IMR-90 (cell line): ENCODE measurements at regions of chr5 and their contacts with region 1.

Region 1: DNA sequence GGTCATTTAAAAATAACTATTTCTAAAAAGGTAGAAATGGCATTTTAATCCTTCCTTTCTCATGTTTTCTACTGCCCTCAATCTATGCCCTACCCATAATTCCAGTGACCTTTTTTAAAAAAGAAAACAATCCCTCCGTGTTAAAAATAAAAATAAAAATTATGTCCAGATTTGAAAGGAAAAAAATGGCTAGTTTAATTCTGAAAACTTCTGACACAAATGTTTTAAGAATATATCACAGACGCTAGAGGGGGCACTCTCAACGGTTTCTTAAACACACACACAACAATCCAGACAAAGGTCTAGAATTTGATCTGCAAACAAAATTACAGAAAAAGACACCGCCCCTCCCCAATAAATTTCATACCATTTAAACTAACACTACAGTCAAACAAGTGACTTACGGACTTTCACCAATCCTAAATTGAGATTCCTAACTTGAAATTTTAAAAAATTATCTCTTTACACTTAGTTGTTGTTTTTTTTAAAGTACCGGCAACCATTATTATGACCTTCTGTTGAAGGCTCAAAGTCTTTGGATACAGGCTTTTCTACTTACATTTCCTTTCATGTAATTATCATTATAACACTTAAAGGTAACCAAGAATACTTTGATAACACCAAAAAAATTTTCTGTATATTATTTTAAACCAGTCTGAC is 38.2 kb downstream of the CLINT1 start:
- DNase-seq: peak; percentile 65
- ATAC-seq: peak; percentile 20; the same call in 1 of the 2 replicates
- H3K4me3 ChIP-seq: no peak overlapping the region
- H3K27ac ChIP-seq: no peak overlapping the region
- H3K4me1 ChIP-seq: peaks cover 13% of the 10 kb centered on the region
- H3K27me3 ChIP-seq: no peaks in the 10 kb centered on the region
- CTCF ChIP-seq: peak; percentile 61
- POLR2A ChIP-seq: no peak
- RAD21 ChIP-seq: peak; percentile 29; the same call in 1 of the 2 replicates

Region 2: DNA sequence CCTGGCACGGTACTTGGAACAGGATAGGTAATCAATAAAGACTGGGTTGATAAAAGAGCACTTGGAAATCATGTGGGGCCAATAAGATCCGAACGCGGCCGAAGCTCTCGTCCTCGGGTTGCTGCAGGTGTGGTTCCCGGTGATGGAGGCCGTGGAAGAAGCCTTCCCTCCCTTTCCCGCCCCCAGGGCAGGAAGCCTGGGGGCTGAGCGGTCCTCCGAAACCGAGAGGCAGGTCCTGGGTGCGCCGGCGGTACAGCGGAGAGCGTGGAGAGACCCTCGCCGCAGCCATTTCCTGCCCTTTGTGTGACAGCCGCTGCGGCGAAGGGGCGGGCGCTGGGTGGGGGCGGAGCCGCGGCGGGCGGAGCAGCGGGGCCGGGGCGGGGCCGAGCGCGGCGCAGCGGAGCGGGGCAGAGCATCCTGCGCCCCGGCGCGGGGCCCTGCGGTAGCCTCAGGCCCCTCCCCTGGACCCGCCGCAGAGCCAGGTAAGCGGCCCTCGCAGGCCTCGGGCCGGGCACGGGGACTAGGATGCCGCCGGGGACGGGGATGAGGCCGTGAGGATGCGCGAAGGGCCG is 554.9 kb before region 1 on chr5 and contains the start of gene CYFIP2:
- CTCF ChIA-PET with region 1: no interaction called
- POLR2A ChIA-PET with region 1: no interaction called
- dilution Hi-C with region 1: no loop called
- in situ Hi-C with region 1: no loop called
- intact Hi-C with region 1: no loop called
- DNase-seq: peak; percentile 4
- ATAC-seq: peak; percentile 99
- H3K4me3 ChIP-seq: peak within 1 kb of the TSS; percentile 80
- H3K27ac ChIP-seq: no peak within 1 kb of the TSS
- H3K4me1 ChIP-seq: no peaks in the 10 kb centered on the region
- H3K27me3 ChIP-seq: peaks cover 22% of the 10 kb centered on the region
- CTCF ChIP-seq: no peak
- POLR2A ChIP-seq: no peak
- RAD21 ChIP-seq: no peak
- total RNA-seq, gene CYFIP2: 11.7 and 13.4 TPM in 2 replicates

Region 3: GRCh38 chr5:157858527-157859226 is 38.0 kb after region 1 on chr5 and contains the start of gene CLINT1:
- CTCF ChIA-PET with region 1: interaction called, 4 read pairs
- POLR2A ChIA-PET with region 1: no interaction called
- dilution Hi-C with region 1: no loop called
- in situ Hi-C with region 1: no loop called
- intact Hi-C with region 1: loop called (anchors 2 kb)
- DNase-seq: peak; percentile 83
- ATAC-seq: peak; percentile 96
- H3K4me3 ChIP-seq: peak within 1 kb of the TSS; percentile 98
- H3K27ac ChIP-seq: peak within 1 kb of the TSS; percentile 98
- H3K4me1 ChIP-seq: no peaks in the 10 kb centered on the region
- H3K27me3 ChIP-seq: no peaks in the 10 kb centered on the region
- CTCF ChIP-seq: no peak
- POLR2A ChIP-seq: peak; percentile 82
- RAD21 ChIP-seq: no peak
- total RNA-seq, gene CLINT1: 124 and 146 TPM in 2 replicates

Region 4: GRCh38 chr5:157948738-157949410 is 128.2 kb after region 1 on chr5:
- CTCF ChIA-PET with region 1: interaction called, 8 read pairs
- POLR2A ChIA-PET with region 1: no interaction called
- dilution Hi-C with region 1: no loop called
- in situ Hi-C with region 1: no loop called
- intact Hi-C with region 1: loop called (anchors 1 kb)
- DNase-seq: peak; percentile 90
- ATAC-seq: peak; percentile 100
- H3K4me3 ChIP-seq: no peak overlapping the region
- H3K27ac ChIP-seq: no peak overlapping the region
- H3K4me1 ChIP-seq: no peaks in the 10 kb centered on the region
- H3K27me3 ChIP-seq: no peaks in the 10 kb centered on the region
- CTCF ChIP-seq: peak; percentile 93
- POLR2A ChIP-seq: no peak
- RAD21 ChIP-seq: peak; percentile 63

Region 5: DNA sequence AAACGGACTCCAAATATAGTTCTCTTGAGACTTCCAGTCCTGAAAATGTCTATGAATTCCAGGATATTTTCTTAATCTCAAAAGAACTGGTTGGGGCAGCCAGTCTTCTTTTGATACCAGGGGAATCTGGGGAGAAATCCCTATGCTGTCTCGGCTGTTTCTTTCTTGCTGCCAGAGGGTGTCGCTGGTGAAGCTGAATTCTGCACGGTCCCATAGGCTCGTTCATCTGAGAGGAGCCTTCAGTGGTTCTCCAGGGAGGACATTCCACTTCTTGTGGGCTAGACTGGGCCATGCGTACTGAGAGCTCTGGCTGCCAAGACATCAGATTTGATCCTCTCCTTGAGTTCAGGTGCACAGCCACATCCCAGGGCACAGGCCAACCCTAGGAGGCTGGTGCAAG is 193.2 kb after region 1 on chr5:
- CTCF ChIA-PET with region 1: no interaction called
- POLR2A ChIA-PET with region 1: no interaction called
- dilution Hi-C with region 1: loop called (anchors 25 kb)
- in situ Hi-C with region 1: no loop called
- intact Hi-C with region 1: no loop called
- DNase-seq: peak; percentile 12
- ATAC-seq: peak; percentile 72
- H3K4me3 ChIP-seq: no peak overlapping the region
- H3K27ac ChIP-seq: no peak overlapping the region
- H3K4me1 ChIP-seq: no peaks in the 10 kb centered on the region
- H3K27me3 ChIP-seq: no peaks in the 10 kb centered on the region
- CTCF ChIP-seq: peak; percentile 18; the same call in 1 of the 2 replicates
- POLR2A ChIP-seq: no peak
- RAD21 ChIP-seq: no peak

Region 6: GRCh38 chr5:158174918-158175851 is 354.5 kb after region 1 on chr5:
- CTCF ChIA-PET with region 1: no interaction called
- POLR2A ChIA-PET with region 1: no interaction called
- dilution Hi-C with region 1: no loop called
- in situ Hi-C with region 1: no loop called
- intact Hi-C with region 1: loop called (anchors 10 kb)
- DNase-seq: peak; percentile 56
- ATAC-seq: peak; percentile 77
- H3K4me3 ChIP-seq: no peak overlapping the region
- H3K27ac ChIP-seq: no peak overlapping the region
- H3K4me1 ChIP-seq: no peaks in the 10 kb centered on the region
- H3K27me3 ChIP-seq: no peaks in the 10 kb centered on the region; the same call in none of the 2 replicates
- CTCF ChIP-seq: peak; percentile 86
- POLR2A ChIP-seq: 0 out of 2 replicates have a peak, but pooled peaks have one; percentile 28
- RAD21 ChIP-seq: peak; percentile 94

Region 7: GRCh38 chr5:159133041-159133741 is 1312.5 kb after region 1 on chr5:
- CTCF ChIA-PET with region 1: no interaction called
- POLR2A ChIA-PET with region 1: no interaction called
- dilution Hi-C with region 1: no loop called
- in situ Hi-C with region 1: no loop called
- intact Hi-C with region 1: loop called (anchors 5 kb)
- DNase-seq: peak; percentile 67
- ATAC-seq: peak; percentile 78
- H3K4me3 ChIP-seq: no peak overlapping the region
- H3K27ac ChIP-seq: no peak overlapping the region
- H3K4me1 ChIP-seq: peaks cover 2% of the 10 kb centered on the region
- H3K27me3 ChIP-seq: peaks cover 10% of the 10 kb centered on the region
- CTCF ChIP-seq: peak; percentile 90
- POLR2A ChIP-seq: no peak
- RAD21 ChIP-seq: peak; percentile 86